Activated naive CD4-positive, alpha-beta T cell treated with anti-CD3 and anti-CD28 coated beads for 36 hours (primary cell): ENCODE measurements at regions of chr4 and their contacts with region 1.

Region 1: DNA sequence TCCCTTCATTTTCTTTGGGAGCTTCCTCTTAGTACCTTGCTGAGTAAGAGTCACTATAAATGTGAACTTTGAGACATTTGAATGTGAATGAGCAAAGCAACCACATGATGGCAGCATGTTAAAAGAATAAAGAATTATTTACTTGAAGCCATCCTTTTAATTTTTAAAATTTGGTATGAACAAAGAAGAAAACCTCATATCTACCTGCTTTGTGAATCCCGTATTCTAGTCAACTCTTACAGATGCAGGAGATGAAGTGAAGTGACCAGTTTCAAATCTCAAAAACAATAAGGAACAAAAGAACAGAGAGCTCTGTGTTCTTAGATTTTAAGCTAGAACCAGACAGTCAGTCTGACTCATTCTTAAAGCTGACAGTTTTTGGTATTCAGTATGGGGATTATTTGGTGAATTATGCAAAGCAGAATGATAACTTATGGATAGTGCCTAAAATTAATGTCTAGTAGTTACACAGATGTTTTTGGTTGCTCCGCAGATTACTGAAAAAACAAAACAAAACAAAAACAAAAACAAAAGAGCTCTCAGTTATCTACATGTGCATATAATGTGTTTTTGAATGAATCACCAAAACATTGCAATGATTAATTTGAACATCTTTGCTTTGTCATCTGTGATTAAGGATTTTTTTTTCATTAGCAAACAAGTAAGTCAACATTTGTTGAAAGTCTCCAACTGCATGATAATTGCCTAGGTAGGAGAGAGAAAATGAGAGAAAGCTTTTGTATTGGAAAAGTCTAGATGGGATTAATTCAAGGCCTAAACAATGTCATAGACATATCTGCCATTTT is 48.2 kb upstream of the H2AZ1 start:
- DNase-seq: peak; percentile 10
- H3K4me3 Mint-ChIP-seq: no peak overlapping the region
- H3K27ac Mint-ChIP-seq: peak overlapping the region; percentile 59
- H3K4me1 Mint-ChIP-seq: peaks cover 11% of the 10 kb centered on the region
- H3K27me3 Mint-ChIP-seq: peaks cover 5% of the 10 kb centered on the region

Region 2: DNA sequence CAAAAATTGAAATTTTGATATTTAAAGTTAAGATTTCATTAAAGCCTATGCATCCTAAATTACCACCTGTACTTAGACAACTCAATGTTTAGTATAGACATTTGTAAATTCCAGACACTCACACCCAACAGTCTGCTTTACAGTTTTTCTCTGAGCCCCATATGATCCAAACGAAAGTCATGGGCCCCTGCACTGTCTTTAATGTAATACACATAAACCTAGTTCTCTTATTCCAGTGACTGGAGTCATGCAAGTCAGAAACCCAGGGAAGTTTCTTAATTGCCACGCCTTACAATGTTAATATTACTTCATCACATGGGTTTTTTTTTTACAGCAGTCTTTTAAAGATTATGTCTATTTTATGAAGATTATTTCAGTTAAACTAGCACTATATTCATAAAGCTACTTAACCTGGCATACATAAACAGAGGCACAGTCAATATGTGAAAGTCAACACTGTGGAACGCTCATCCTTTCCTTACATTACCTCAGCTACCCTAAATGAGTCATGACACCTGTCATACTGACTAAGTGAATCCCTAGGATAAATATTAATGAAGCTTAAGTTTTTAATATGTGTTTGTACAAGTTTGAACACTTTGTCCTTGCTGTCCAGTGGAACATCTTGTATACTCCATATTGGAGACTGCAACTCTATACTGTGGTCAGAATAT is 19.5 kb after region 1 on chr4:
- CTCF ChIA-PET with region 1: interaction called, 5 read pairs
- intact Hi-C with region 1: loop called (anchors 1 kb)
- DNase-seq: peak; percentile 22
- H3K4me3 Mint-ChIP-seq: no peak overlapping the region
- H3K27ac Mint-ChIP-seq: peak overlapping the region; percentile 11
- H3K4me1 Mint-ChIP-seq: peaks cover 10% of the 10 kb centered on the region
- H3K27me3 Mint-ChIP-seq: peaks cover 3% of the 10 kb centered on the region

Region 3: GRCh38 chr4:100063355-100063754 is 65.1 kb after region 1 on chr4:
- CTCF ChIA-PET with region 1: interaction called, 3 read pairs
- intact Hi-C with region 1: loop called (anchors 1 kb)
- DNase-seq: no peak
- H3K4me3 Mint-ChIP-seq: no peak overlapping the region
- H3K27ac Mint-ChIP-seq: no peak overlapping the region
- H3K4me1 Mint-ChIP-seq: no peaks in the 10 kb centered on the region
- H3K27me3 Mint-ChIP-seq: peaks cover 20% of the 10 kb centered on the region

Region 4: GRCh38 chr4:100525686-100526085 is 527.4 kb after region 1 on chr4:
- CTCF ChIA-PET with region 1: no interaction called
- intact Hi-C with region 1: no loop called
- DNase-seq: no peak
- H3K4me3 Mint-ChIP-seq: no peak overlapping the region
- H3K27ac Mint-ChIP-seq: no peak overlapping the region
- H3K4me1 Mint-ChIP-seq: peaks cover 2% of the 10 kb centered on the region
- H3K27me3 Mint-ChIP-seq: peaks cover 7% of the 10 kb centered on the region

Region 5: GRCh38 chr4:100742045-100742444 is 743.8 kb after region 1 on chr4:
- CTCF ChIA-PET with region 1: no interaction called
- intact Hi-C with region 1: loop called (anchors 2 kb)
- DNase-seq: no peak
- H3K4me3 Mint-ChIP-seq: no peak overlapping the region
- H3K27ac Mint-ChIP-seq: no peak overlapping the region
- H3K4me1 Mint-ChIP-seq: no peaks in the 10 kb centered on the region
- H3K27me3 Mint-ChIP-seq: no peaks in the 10 kb centered on the region